CD8-positive, alpha-beta T cell (primary cell): ENCODE measurements at regions of chr9 and their contacts with region 1.

Region 1: GRCh38 chr9:134455934-134456739 is 129.9 kb downstream of the RXRA start:
- DNase-seq: peak; percentile 54 to 90 (median 76)
- ATAC-seq: peak; percentile 92
- H3K4me3 ChIP-seq: peak overlapping the region; percentile 50 to 60
- H3K4me3 Mint-ChIP-seq: peak overlapping the region; percentile 86
- H3K27ac ChIP-seq: peak overlapping the region; percentile 82 to 97
- H3K27ac Mint-ChIP-seq: peak overlapping the region; percentile 93
- H3K4me1 ChIP-seq: peaks cover 18% of the 10 kb centered on the region
- H3K4me1 Mint-ChIP-seq: peaks cover 8% of the 10 kb centered on the region
- H3K27me3 ChIP-seq: no peaks in the 10 kb centered on the region
- H3K27me3 Mint-ChIP-seq: no peaks in the 10 kb centered on the region
- CTCF ChIP-seq: no peak

Region 2: GRCh38 chr9:134403682-134404301 is 52.3 kb before region 1 on chr9:
- CTCF ChIA-PET with region 1: no interaction called
- POLR2A ChIA-PET with region 1: no interaction called
- intact Hi-C with region 1: no loop called
- DNase-seq: peak in 7 of 9 experiments; percentile 25 to 79 (median 59)
- ATAC-seq: peak; percentile 34
- H3K4me3 ChIP-seq: no peak overlapping the region
- H3K4me3 Mint-ChIP-seq: peak overlapping the region; percentile 12
- H3K27ac ChIP-seq: no peak overlapping the region
- H3K27ac Mint-ChIP-seq: peak overlapping the region; percentile 67
- H3K4me1 ChIP-seq: peaks cover 55% of the 10 kb centered on the region
- H3K4me1 Mint-ChIP-seq: peaks cover 32% of the 10 kb centered on the region
- H3K27me3 ChIP-seq: no peaks in the 10 kb centered on the region
- H3K27me3 Mint-ChIP-seq: no peaks in the 10 kb centered on the region
- CTCF ChIP-seq: no peak

Region 3: GRCh38 chr9:134475011-134475790 is 19.1 kb after region 1 on chr9:
- CTCF ChIA-PET with region 1: interaction called, 6 read pairs
- POLR2A ChIA-PET with region 1: interaction called, 5 read pairs
- intact Hi-C with region 1: loop called in 1 of 2 experiments (anchors 1 kb)
- DNase-seq: peak in 8 of 9 experiments; percentile 9 to 75 (median 42)
- ATAC-seq: peak; percentile 87
- H3K4me3 ChIP-seq: no peak overlapping the region
- H3K4me3 Mint-ChIP-seq: peak overlapping the region; percentile 29
- H3K27ac ChIP-seq: peak overlapping the region; percentile 54 to 64
- H3K27ac Mint-ChIP-seq: peak overlapping the region; percentile 97
- H3K4me1 ChIP-seq: peaks cover 28% of the 10 kb centered on the region
- H3K4me1 Mint-ChIP-seq: peaks cover 10% of the 10 kb centered on the region
- H3K27me3 ChIP-seq: no peaks in the 10 kb centered on the region
- H3K27me3 Mint-ChIP-seq: no peaks in the 10 kb centered on the region
- CTCF ChIP-seq: no peak

Region 4: DNA sequence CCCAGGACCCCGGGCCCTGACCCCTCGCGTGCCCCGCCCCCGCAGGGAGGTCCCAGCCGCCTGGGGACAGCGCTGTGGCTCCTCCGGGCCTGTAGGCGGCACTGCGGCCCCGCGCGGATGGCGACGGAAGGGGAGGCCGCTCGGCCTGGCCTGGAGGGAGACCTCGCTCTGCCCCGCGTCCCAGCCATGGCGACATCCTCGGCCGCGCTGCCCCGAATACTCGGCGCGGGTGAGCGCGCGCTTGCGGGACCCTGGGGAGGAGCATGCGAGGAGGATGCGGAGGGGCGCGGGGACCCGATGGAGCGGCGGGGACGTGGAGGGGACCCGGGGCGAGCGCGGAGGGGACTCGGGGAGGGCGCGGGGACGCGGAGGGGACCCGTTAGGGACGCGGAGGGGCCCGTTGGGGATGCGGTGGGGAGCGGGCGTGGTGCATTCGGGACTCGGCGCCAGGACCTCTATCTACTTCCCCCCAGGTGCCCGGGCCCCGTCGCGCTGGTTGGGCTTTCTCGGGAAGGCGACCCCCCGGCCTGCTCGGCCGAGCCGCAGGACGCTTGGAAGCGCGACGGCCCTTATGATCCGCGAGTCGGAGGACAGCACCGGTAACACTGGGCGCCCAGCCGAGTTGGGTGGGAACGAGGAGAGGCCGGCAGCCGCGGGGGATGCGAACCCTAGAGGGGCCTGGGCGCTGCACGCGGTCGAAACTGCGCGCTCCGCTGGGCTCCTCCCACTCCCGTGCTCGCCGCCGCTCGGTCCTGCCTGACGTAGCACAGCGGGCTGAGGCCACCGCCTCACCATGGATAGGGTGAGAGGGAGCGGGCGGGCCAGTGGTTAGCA is 1044.6 kb after region 1 on chr9 and contains the start of gene MRPS2:
- CTCF ChIA-PET with region 1: no interaction called
- POLR2A ChIA-PET with region 1: no interaction called
- intact Hi-C with region 1: loop called in 1 of 2 experiments (anchors 10 kb)
- DNase-seq: peak; percentile 63 to 90 (median 82)
- ATAC-seq: peak; percentile 93
- H3K4me3 ChIP-seq: peak within 1 kb of the TSS; percentile 62 to 94
- H3K4me3 Mint-ChIP-seq: peak within 1 kb of the TSS; percentile 88
- H3K27ac ChIP-seq: peak within 1 kb of the TSS; percentile 53 to 58
- H3K27ac Mint-ChIP-seq: peak within 1 kb of the TSS; percentile 82
- H3K4me1 ChIP-seq: peaks cover 23% of the 10 kb centered on the region
- H3K4me1 Mint-ChIP-seq: peaks cover 22% of the 10 kb centered on the region
- H3K27me3 ChIP-seq: no peaks in the 10 kb centered on the region
- H3K27me3 Mint-ChIP-seq: no peaks in the 10 kb centered on the region
- CTCF ChIP-seq: peak; percentile 78
- total RNA-seq, gene MRPS2: 29.6 to 31.9 TPM